GM13976 (cell line): ENCODE measurements at regions of chr15 and their contacts with region 1.

Region 1: DNA sequence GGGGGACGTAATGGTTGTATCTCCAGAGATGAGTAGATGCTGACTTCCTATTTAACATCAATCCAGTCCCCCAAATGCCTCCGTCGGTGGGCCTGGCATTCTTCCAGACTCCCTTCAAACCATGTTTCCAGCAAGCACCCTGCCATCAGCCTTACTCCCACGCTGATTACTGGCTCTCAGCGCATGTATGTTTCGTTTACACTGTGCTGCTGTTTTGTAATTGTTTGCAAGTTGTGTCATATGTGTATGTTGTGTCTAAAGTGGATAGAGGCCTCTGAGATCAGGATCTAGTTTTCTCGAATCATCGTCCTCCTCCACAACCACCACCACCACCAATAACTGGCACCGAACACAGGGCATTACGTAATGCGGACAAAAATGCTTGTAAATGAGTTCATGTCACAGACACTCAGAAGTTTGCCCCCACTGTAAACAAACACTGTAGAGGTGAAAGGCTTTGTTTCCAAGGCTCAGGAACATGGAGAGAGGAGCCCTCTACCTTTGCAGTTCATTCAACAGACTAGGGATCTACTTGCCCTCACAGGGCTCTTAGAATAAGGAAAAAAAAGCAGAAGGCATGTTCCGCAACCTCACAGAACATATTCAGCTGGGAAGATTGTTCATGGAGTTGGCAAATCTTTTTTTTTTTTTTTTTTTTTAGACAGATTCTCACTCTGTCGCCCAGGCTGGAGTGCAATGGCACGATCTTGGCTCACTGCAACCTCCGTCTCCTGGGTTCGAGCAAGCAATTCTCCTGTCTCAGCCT is 46.1 kb upstream of the SEMA4B start:
- DNase-seq: no peak
- CTCF ChIP-seq: no peak

Region 2: GRCh38 chr15:89514596-89515406 is 640.2 kb before region 1 on chr15:
- in situ Hi-C with region 1: no loop called
- DNase-seq: no peak
- CTCF ChIP-seq: no peak

Region 3: DNA sequence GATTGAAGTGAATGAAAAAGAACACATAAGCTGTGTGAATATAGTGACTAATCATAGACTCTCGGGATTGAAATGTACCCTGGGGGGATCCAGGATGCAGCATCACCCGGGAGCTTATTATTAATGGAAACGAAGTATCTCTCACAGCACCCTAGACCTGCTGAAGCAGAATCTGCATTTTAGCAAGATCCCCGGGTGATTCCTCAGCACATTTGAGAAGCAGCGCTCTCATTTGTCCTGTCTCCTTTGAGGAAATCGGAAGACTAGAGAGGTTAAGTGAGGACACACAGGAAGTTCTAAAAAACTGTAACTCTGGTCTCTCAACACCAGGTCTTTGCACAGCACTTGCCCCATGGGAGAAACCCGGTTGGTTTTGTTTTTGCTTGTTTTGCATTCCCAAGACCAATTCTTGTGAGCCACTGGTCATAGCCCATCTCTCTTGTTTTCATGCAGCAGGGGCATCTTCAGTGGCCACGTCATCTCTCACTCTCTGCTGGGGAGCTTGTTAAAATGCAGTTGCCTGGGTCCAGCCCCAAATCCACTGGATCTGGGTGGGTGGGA is 123.7 kb before region 1 on chr15:
- in situ Hi-C with region 1: no loop called
- DNase-seq: peak; percentile 84
- CTCF ChIP-seq: no peak

Region 4: DNA sequence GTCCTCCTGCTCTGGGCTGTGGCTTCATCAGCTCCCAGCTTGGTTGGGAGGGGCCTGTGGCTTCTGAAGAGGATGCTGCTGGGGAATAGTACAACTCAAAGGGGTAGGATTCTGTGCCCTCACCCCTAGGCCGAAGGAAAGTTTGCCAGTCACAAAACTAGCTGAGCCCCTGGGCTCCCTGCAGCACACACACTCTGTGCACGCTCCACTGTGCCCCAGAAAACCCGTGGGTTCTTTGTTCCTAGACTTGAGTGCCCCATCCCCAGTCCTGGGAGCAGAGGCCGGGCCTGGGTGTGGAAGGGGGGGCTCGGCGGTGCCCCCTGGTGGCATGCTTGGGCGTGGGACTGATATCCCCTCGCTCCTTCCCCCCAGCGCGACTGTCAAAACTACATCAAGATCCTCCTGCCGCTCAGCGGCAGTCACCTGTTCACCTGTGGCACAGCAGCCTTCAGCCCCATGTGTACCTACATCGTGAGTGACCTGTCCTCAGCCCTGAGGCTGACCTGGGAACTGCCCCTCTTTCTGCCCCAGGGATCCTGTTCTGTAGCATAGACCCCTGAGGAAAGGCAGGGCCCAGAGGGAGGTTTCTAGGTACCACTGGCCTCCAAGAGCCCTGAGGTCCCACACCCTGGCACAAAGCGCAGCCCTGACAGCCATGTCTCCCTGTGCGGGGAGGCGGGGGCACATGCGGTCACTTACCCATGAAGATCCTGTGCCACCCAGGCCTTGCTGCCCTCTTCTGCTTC is 64.5 kb after region 1 on chr15:
- in situ Hi-C with region 1: loop called (anchors 5 kb)
- DNase-seq: peak; percentile 78
- CTCF ChIP-seq: peak; percentile 65

Region 5: DNA sequence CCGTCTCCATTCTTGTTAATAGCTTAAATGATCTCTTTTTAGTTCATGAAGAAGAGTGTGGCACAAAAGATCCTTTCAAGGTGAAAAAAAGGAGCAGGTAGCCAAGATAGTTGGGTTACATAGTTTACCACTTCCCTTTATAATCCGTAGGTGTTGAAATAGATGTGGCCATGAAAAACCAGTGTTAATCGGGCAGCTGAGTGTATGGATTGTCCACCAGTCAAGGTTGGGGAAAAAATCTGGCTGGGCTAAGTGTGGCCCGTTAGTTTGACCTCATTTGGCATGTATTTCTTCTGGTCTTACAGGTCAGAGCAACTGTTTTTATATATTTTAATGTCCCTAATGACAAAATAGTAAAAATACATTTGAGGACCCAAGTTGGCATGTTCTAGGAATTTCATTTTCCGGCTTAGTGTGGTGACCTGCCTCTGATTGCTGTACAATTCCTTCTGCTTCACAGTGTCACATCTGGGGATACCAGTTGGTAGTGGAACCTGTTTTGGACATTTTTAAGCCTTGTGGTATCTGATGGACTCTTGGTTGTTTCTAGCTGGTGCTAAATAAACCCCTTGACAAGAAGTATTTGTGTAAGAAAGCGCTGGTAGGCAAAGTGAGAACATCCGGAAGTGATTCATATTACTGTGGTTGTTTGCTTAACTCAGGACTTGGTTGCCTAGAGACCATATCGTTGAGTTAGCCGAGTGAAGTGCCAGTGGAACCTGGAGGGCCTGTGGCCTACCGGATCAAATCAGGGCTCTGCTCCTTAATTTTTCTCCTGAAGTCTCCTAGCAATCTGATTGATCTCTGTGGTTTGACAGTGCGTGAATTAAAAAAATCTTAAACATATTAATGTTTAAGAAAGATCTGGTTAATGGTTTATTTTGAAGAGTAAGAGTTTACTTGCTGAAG is 245.6 kb after region 1 on chr15:
- in situ Hi-C with region 1: no loop called
- DNase-seq: peak; percentile 77
- CTCF ChIP-seq: no peak